ENCODE measurements at regions of chr3 and their contacts with region 1.

Region 1: GRCh38 chr3:67037615-67038014 is 39.5 kb downstream of the KBTBD8 start:
- DNase-seq: no peak
- ATAC-seq: peak; percentile 63

Region 2: GRCh38 chr3:66971891-66972551 is 65.6 kb before region 1 on chr3:
- intact Hi-C with region 1: loop called (anchors 5 kb)
- DNase-seq: peak; percentile 75
- ATAC-seq: peak; percentile 99

Region 3: GRCh38 chr3:68033867-68034266 is 996.3 kb after region 1 on chr3:
- intact Hi-C with region 1: no loop called
- DNase-seq: no peak
- ATAC-seq: no peak